ENCODE measurements at regions of chr22 and their contacts with region 1.

Region 1: GRCh38 chr22:26330966-26331625 is 98.0 kb upstream of the ASPHD2 start:
- DNase-seq: peak in 7 of 10 donors; percentile 47 to 90 (median 68)

Region 2: DNA sequence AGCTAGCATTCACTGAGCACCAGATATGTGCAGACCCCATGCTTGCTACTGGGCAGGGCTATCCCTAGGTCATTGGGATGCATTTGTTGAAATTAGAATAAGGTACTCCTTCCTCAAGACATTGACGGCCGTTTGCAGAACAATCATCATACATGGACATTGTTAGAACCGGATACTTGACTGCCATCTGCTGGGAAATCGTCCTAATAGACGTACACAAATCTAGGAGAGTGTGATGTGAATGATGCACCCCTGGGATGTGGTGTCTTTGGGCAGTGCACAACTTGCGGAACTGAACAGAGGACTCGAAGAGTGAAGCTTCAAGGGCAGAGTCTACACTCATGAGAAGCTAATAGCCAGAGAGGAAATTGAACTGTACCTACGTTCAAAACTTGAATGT is 553.2 kb before region 1 on chr22:
- intact Hi-C with region 1: loop called (anchors 10 kb)
- DNase-seq: peak in 2 of 10 donors; percentile 12 to 13

Region 3: DNA sequence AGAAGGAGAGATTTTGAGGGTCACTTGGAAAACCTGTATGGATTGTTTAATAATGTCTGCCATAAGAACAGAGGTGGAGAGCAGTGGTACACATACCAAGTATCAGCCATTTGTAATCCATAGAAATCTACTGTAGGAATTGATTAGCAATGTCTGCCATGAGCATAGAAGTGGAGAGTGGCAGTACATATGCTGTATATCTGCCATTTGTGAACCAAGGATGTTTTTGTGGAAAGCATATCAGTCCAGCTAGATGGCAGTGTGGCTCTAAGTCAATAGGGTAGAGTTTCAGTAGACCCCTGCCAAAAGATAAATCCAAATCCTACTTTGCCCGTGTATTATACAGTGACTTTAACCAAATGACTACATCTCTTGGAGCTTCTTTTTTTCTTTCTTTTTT is 244.7 kb before region 1 on chr22:
- intact Hi-C with region 1: loop called (anchors 10 kb)
- DNase-seq: no peak

Region 4: GRCh38 chr22:26172389-26172990 is 158.6 kb before region 1 on chr22:
- intact Hi-C with region 1: loop called (anchors 2 kb)
- DNase-seq: peak in 7 of 10 donors; percentile 42 to 88 (median 52)